ENCODE measurements at regions of chr13 and their contacts with region 1.

Region 1: GRCh38 chr13:30442926-30443325 is 20.6 kb downstream of the UBE2L5 start:
- DNase-seq: no peak
- H3K4me3 Mint-ChIP-seq: no peak overlapping the region
- H3K27ac Mint-ChIP-seq: no peak overlapping the region
- H3K4me1 Mint-ChIP-seq: peaks cover 11% of the 10 kb centered on the region
- H3K27me3 Mint-ChIP-seq: peaks cover 13% of the 10 kb centered on the region

Region 2: GRCh38 chr13:30585748-30586262 is 142.9 kb after region 1 on chr13:
- CTCF ChIA-PET with region 1: no interaction called
- POLR2A ChIA-PET with region 1: interaction called, 10 read pairs
- DNase-seq: no peak
- H3K4me3 Mint-ChIP-seq: no peak overlapping the region
- H3K27ac Mint-ChIP-seq: no peak overlapping the region
- H3K4me1 Mint-ChIP-seq: no peaks in the 10 kb centered on the region
- H3K27me3 Mint-ChIP-seq: peaks cover 8% of the 10 kb centered on the region